MCF 10A (cell line): ENCODE measurements at regions of chr1 and their contacts with region 1.

Region 1: GRCh38 chr1:209651148-209651547 is 1.1 kb downstream of the LAMB3 start:
- DNase-seq: peak; percentile 99
- H3K4me3 Mint-ChIP-seq: peak overlapping the region; percentile 83
- H3K27ac Mint-ChIP-seq: peak overlapping the region; percentile 99
- H3K4me1 Mint-ChIP-seq: peaks cover 80% of the 10 kb centered on the region
- H3K27me3 Mint-ChIP-seq: no peaks in the 10 kb centered on the region
- CTCF ChIP-seq: no peak

Region 2: DNA sequence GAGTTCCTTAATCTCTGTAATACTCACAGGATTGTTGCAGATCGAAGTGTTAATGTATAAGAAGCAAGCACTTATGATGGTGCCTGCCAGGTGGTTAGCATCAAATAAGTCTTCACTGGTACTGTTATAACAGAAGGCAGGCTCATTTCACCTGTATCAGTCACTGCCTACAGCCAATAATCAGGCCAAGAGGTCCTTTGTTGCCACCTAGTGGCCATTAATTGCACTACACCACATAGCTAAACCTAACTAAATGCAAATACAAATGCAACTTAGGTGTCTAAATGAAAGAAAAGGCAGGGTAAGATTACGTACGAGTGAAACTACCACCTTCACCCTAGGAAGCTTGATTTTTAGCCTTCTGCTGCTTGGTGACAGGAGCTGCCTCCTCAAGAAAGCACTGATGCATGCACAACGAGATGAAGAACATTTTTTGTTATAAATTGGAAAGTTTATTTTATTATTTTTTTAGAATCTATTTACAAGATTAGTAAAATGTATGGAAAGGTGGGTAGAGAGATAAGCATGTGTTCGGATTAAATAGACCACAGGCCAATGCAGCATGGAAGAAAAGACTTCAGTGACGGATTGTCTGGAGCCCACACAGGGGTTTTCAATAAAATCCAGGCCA is 402.4 kb before region 1 on chr1:
- CTCF ChIA-PET with region 1: no interaction called
- POLR2A ChIA-PET with region 1: no interaction called
- intact Hi-C with region 1: no loop called
- DNase-seq: peak; percentile 91
- H3K4me3 Mint-ChIP-seq: no peak overlapping the region
- H3K27ac Mint-ChIP-seq: no peak overlapping the region
- H3K4me1 Mint-ChIP-seq: peaks cover 5% of the 10 kb centered on the region
- H3K27me3 Mint-ChIP-seq: no peaks in the 10 kb centered on the region
- CTCF ChIP-seq: peak; percentile 99

Region 3: DNA sequence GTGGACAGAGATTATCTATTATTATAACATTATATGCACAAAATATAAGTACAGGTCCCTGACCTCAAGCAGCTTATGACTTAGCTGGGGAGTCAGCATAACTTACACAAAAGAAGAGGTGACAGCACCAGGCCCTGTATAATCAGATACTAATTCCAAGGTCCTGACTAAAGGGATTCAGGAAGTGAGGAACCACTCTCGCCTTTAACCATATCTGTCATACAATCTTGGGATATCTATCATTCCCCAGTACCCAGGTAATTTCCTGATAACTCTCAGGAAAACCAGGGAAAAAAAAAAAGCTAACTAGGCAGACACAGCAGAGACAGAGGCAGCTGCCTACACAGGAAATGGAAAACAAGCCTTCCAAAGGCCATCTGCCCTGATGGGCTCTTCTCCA is 146.1 kb before region 1 on chr1:
- CTCF ChIA-PET with region 1: no interaction called
- POLR2A ChIA-PET with region 1: no interaction called
- intact Hi-C with region 1: no loop called
- DNase-seq: no peak
- H3K4me3 Mint-ChIP-seq: no peak overlapping the region
- H3K27ac Mint-ChIP-seq: no peak overlapping the region
- H3K4me1 Mint-ChIP-seq: no peaks in the 10 kb centered on the region
- H3K27me3 Mint-ChIP-seq: no peaks in the 10 kb centered on the region
- CTCF ChIP-seq: no peak

Region 4: GRCh38 chr1:209527993-209528392 is 123.2 kb before region 1 on chr1:
- CTCF ChIA-PET with region 1: no interaction called
- POLR2A ChIA-PET with region 1: interaction called, 16 read pairs
- intact Hi-C with region 1: no loop called
- DNase-seq: peak; percentile 36
- H3K4me3 Mint-ChIP-seq: no peak overlapping the region
- H3K27ac Mint-ChIP-seq: peak overlapping the region; percentile 60
- H3K4me1 Mint-ChIP-seq: peaks cover 64% of the 10 kb centered on the region
- H3K27me3 Mint-ChIP-seq: no peaks in the 10 kb centered on the region
- CTCF ChIP-seq: no peak

Region 5: DNA sequence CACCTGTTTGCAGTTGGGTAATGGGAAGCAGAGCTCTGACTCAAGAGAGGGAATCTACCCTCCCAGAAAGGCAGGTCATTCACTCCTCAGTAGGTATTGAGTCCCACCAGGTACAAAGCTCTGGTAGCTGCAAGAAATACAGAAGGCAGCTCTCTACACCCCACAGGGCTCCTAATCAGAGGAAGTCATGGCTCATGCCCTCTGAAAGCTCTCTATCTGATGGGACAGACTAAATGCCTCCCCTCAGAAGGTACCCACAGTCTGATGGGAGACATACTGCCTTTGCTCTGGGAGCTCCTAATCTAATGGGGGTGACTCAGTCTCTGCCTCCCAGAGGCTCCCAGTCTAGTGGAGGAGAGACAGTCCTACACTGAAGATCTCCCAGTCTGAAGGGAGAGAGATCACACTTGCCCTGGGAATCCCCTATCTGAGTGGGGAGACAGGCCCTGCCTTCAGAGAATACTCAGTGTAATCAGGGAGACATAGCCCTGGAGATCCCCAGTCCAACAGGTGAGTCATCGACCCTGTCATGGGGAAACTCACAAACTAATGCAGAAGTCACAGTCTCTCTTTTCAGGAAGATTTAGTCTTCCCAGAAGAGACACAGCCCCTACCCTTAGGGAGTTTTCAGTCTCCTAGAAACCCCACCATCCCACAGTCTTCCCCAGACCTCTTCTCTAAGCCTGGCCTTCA is 43.9 kb before region 1 on chr1:
- CTCF ChIA-PET with region 1: interaction called, 21 read pairs
- POLR2A ChIA-PET with region 1: interaction called, 29 read pairs
- intact Hi-C with region 1: loop called (anchors 1 kb)
- DNase-seq: peak; percentile 92
- H3K4me3 Mint-ChIP-seq: no peak overlapping the region
- H3K27ac Mint-ChIP-seq: peak overlapping the region; percentile 81
- H3K4me1 Mint-ChIP-seq: no peaks in the 10 kb centered on the region
- H3K27me3 Mint-ChIP-seq: no peaks in the 10 kb centered on the region
- CTCF ChIP-seq: no peak

Region 6: GRCh38 chr1:209667708-209668107 is 16.6 kb after region 1 on chr1:
- CTCF ChIA-PET with region 1: interaction called, 22 read pairs
- POLR2A ChIA-PET with region 1: interaction called, 254 read pairs
- intact Hi-C with region 1: loop called (anchors 2 kb)
- DNase-seq: no peak
- H3K4me3 Mint-ChIP-seq: no peak overlapping the region
- H3K27ac Mint-ChIP-seq: no peak overlapping the region
- H3K4me1 Mint-ChIP-seq: peaks cover 21% of the 10 kb centered on the region
- H3K27me3 Mint-ChIP-seq: no peaks in the 10 kb centered on the region
- CTCF ChIP-seq: no peak

Region 7: DNA sequence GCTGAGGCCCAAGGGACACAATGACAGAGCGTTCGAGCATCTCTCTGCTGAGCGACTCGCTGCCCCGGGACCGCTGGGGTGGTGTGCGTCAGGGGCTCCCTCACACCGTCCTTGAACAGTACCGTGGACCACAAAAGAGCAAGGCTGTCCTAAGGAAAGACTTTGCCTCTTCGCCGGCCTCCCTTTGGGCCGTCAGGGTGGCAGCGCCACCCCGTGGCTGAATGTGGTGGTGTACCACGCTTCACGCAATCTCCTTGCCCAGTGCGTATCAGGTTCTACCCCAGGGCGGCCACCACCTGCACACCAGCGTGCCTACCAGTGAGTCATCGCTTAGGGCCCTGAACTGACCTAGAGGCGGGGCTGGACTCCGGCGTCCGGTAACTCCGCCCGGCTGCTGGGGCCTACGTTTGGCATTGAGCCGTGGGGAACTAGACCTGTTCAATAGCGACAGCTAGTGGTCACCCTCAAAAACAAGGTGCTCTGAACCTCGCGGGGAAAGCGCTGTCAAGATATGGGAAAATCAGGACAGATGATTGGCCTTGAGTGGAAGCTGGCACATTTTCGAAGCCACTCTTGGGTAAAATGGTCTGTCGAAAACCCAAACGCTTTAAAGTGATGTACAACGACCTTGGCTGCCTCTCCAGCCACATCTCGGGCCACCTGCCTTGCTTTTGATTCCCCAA is 96.6 kb after region 1 on chr1:
- CTCF ChIA-PET with region 1: interaction called, 16 read pairs
- POLR2A ChIA-PET with region 1: interaction called, 7 read pairs
- intact Hi-C with region 1: loop called (anchors 2 kb)
- DNase-seq: peak; percentile 100
- H3K4me3 Mint-ChIP-seq: no peak overlapping the region
- H3K27ac Mint-ChIP-seq: no peak overlapping the region
- H3K4me1 Mint-ChIP-seq: peaks cover 23% of the 10 kb centered on the region
- H3K27me3 Mint-ChIP-seq: no peaks in the 10 kb centered on the region
- CTCF ChIP-seq: peak; percentile 98

Region 8: DNA sequence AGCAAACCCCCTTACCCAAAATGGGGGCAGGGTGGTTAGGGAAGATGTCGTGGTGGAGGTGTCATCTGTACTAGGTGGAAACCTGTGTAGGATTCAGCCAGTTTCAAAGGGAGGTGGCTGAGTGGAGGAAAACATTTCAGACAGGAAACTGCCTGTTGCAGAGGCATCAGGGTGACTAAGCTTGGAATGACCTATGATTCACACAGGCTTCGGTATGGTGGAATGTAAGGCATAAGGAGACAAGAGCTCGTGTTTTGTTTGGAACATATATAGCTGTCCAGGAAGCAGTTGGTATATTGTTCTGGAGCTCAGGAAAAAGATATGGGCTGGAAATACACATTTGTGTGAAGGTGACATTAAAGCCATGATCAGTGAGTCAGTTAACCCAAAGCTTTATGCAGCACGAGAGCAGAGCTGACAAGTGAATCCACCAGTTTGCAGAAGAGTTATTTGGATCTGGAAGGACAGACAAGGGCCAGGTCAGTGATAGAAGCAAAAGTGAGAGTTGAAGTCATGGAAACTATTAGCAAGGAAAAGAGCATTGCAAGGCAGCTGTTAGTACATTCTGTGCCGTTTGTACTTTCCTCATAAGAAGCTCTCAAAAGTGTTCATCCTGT is 188.8 kb after region 1 on chr1:
- CTCF ChIA-PET with region 1: interaction called, 5 read pairs
- POLR2A ChIA-PET with region 1: interaction called, 10 read pairs
- intact Hi-C with region 1: no loop called
- DNase-seq: peak; percentile 99
- H3K4me3 Mint-ChIP-seq: peak overlapping the region; percentile 29
- H3K27ac Mint-ChIP-seq: peak overlapping the region; percentile 82
- H3K4me1 Mint-ChIP-seq: peaks cover 30% of the 10 kb centered on the region
- H3K27me3 Mint-ChIP-seq: no peaks in the 10 kb centered on the region
- CTCF ChIP-seq: no peak